Breast epithelium (tissue), 4 donors: ENCODE measurements at regions of chr9 and their contacts with region 1.

Region 1: GRCh38 chr9:105950894-105951293 is 256.6 kb downstream of the TMEM38B start:
- DNase-seq: no peak
- H3K4me3 ChIP-seq: no peak overlapping the region
- H3K27ac ChIP-seq: no peak overlapping the region
- H3K4me1 ChIP-seq: no peaks in the 10 kb centered on the region
- H3K27me3 ChIP-seq: no peaks in the 10 kb centered on the region
- CTCF ChIP-seq: no peak
- POLR2A ChIP-seq: no peak

Region 2: DNA sequence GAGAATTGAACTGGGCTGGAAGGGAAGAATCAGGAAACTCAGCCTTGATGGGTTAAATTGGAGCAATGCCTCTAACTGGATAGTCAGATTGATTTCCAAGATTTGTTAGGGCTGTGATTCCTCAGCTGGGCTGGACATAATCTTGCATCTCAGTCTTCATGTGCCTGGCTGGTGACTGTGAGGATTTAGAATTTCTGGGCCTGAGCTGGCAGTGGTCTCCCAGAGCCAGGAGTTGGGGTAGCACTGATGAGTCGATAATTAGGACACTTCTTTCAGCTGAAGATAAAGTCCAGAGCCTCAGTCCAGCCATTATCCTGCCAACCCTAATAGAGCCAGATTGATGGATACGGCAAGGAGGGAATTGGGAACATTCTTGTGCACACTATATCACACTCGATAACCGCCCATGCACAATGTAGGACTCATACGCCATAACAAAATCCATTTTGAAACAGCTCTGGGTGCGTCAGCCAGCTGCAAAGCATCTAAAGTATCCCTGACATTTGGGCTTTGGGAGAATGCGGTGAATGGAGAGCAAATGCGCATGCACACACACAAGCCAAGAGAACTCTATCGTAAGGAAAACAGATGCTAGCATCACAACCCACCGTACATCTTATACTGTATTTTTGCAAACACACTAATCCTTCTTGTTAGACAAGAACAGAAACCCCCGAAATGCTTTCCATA is 1943.8 kb after region 1 on chr9:
- intact Hi-C with region 1: loop called (anchors 10 kb)
- DNase-seq: no peak
- H3K4me3 ChIP-seq: no peak overlapping the region
- H3K27ac ChIP-seq: no peak overlapping the region
- H3K4me1 ChIP-seq: no peaks in the 10 kb centered on the region
- H3K27me3 ChIP-seq: no peaks in the 10 kb centered on the region
- CTCF ChIP-seq: no peak
- POLR2A ChIP-seq: no peak